ENCODE measurements at regions of chr3 and their contacts with region 1.

Region 1: GRCh38 chr3:72938471-72939265 is 50.8 kb downstream of the GXYLT2 start:
- DNase-seq: peak; percentile 68
- H3K4me3 ChIP-seq: no peak overlapping the region
- H3K27ac ChIP-seq: no peak overlapping the region
- H3K4me1 ChIP-seq: no peaks in the 10 kb centered on the region
- H3K27me3 ChIP-seq: peaks cover 0 to 4% of the 10 kb centered on the region in 2 experiments
- CTCF ChIP-seq: peak in 1 of 2 donors; percentile 33
- POLR2A ChIP-seq: no peak

Region 2: DNA sequence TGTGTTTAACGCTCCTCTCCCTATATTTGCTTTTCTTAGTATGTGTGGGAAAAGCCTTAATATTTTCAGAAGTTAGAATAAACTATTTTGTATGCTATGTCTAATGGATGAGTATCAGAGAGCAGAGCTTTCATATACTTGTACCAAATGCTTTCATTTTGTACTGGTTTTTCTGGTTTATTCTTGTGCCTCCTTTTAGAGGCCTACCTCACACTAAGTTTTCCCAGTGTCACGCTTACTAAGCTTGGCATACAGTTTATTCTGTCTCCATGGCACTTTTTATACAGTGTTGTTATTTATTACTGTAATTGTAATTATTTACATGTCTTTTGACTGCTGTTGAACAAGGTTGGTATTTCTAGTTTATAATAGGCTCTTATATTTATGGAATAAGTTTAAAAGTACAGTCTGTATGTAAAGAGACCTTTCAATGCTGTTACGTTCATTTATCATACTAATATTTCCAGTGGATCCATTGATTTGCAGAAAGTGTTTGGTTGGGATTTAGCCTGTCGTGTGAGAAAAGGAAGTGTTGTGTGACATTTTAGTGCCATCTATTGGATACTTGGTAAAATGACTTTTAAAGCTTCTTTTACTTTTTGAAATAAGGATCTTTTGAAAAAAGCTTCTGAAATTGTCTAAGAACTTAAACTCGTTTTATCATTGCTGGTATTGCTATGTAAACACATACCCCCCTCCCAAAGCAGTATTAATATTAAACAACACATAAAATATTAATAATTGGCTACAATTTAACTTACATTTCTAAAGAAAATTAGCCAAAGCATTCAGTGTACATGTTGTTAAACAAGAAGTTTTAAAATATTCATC is 117.6 kb after region 1 on chr3:
- CTCF ChIA-PET with region 1: interaction called, 91 read pairs
- POLR2A ChIA-PET with region 1: no interaction called
- dilution Hi-C with region 1: no loop called
- intact Hi-C with region 1: loop called (anchors 1 kb)
- DNase-seq: peak; percentile 46
- H3K4me3 ChIP-seq: no peak overlapping the region
- H3K27ac ChIP-seq: no peak overlapping the region
- H3K4me1 ChIP-seq: peaks cover 4% of the 10 kb centered on the region
- H3K27me3 ChIP-seq: no peaks in the 10 kb centered on the region
- CTCF ChIP-seq: peak in 1 of 2 donors; percentile 4
- POLR2A ChIP-seq: no peak

Region 3: DNA sequence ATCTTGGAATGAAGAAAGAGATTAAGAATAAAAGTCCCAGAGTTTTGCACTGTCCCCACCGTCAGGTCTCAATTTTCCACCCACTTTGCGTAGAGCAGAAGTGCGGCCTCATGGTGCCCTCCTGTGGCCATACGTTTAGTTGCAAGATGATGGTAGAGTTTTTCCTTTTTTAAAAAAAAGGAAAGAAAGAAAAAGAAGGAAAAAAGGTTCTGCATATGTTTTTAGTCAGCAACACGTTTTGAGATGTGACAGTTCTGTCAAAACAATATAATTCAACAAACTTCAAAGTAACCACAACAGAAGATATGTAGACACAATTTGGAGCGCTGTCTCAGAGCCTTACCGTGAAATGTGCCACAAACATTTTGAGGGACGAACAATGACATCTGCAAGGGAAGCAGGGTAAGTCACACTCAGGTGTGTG is 147.4 kb after region 1 on chr3:
- CTCF ChIA-PET with region 1: interaction called, 65 read pairs
- POLR2A ChIA-PET with region 1: no interaction called
- dilution Hi-C with region 1: no loop called
- intact Hi-C with region 1: loop called (anchors 1 kb)
- DNase-seq: peak; percentile 44
- H3K4me3 ChIP-seq: no peak overlapping the region
- H3K27ac ChIP-seq: no peak overlapping the region
- H3K4me1 ChIP-seq: no peaks in the 10 kb centered on the region
- H3K27me3 ChIP-seq: no peaks in the 10 kb centered on the region
- CTCF ChIP-seq: peak; percentile 55 to 64
- POLR2A ChIP-seq: no peak